CD8-positive, alpha-beta memory T cell (primary cell): ENCODE measurements at regions of chr14 and their contacts with region 1.

Region 1: GRCh38 chr14:24114536-24115450 is at the starts of genes DCAF11 and NRL:
- DNase-seq: peak; percentile 97 to 100 (median 99)
- H3K4me3 ChIP-seq: peak within 1 kb of the TSS; percentile 99
- H3K4me3 Mint-ChIP-seq: peak within 1 kb of the TSS; percentile 96 to 100 (median 98)
- H3K27ac ChIP-seq: peak within 1 kb of the TSS; percentile 98
- H3K27ac Mint-ChIP-seq: peak within 1 kb of the TSS; percentile 98 to 100 (median 99)
- H3K4me1 ChIP-seq: peaks cover 28% of the 10 kb centered on the region
- H3K4me1 Mint-ChIP-seq: peaks cover 30 to 37% (median 36%) of the 10 kb centered on the region in 3 donors
- H3K27me3 ChIP-seq: no peaks in the 10 kb centered on the region
- H3K27me3 Mint-ChIP-seq: peaks cover 0 to 5% of the 10 kb centered on the region in 2 donors
- total RNA-seq, gene DCAF11: 69.0 to 72.4 TPM
- total RNA-seq, gene NRL: 1.5 to 1.6 TPM

Region 2: GRCh38 chr14:24080888-24081738 is 33.7 kb before region 1 on chr14:
- CTCF ChIA-PET with region 1: interaction called, 36 read pairs
- POLR2A ChIA-PET with region 1: interaction called, 28 read pairs
- DNase-seq: peak; percentile 36 to 80 (median 64)
- H3K4me3 ChIP-seq: peak overlapping the region; percentile 62
- H3K4me3 Mint-ChIP-seq: peak overlapping the region; percentile 85 to 93 (median 88)
- H3K27ac ChIP-seq: peak overlapping the region; percentile 61
- H3K27ac Mint-ChIP-seq: peak overlapping the region; percentile 53 to 92 (median 82)
- H3K4me1 ChIP-seq: peaks cover 9% of the 10 kb centered on the region
- H3K4me1 Mint-ChIP-seq: peaks cover 15 to 18% (median 16%) of the 10 kb centered on the region in 3 donors
- H3K27me3 ChIP-seq: no peaks in the 10 kb centered on the region
- H3K27me3 Mint-ChIP-seq: peaks cover 0 to 2% of the 10 kb centered on the region in 2 donors

Region 3: DNA sequence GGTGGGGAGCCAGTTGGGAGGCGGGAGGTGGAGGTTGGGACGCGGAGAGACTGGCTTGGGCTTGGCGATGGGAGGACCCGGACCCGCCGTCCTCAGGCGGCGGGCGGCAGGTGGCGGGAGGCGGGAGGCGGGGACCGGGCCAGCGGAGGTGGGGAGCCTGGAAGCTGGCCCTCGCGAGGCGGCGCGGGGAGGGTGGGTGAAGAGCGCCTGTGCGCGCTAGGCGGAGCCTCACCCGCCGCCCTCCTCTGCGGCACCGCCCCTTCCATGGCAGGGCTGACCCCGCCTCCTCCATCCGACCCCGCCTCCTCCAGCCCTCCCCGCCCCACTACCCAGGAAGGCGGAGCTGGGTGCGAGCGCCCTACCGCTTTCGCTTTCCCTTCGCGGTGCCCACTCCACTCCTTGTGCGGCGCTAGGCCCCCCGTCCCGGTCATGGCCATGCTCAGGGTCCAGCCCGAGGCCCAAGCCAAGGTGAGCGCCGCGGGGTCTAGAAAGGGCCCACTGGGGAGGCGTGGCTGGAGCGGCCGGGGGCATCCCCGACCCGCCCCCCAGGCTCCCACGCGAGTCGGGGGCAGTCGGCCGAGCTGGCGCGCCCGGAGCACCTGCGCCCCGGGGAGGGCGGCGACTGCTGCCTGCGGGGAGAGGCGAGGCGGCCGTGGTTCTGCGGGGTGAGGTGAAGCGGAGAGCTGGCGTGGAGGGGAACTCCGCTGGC is 21.2 kb after region 1 on chr14 and contains the start of gene PSME1:
- CTCF ChIA-PET with region 1: interaction called, 28 read pairs
- POLR2A ChIA-PET with region 1: interaction called, 58 read pairs
- DNase-seq: peak; percentile 91 to 95 (median 93)
- H3K4me3 ChIP-seq: peak within 1 kb of the TSS; percentile 73
- H3K4me3 Mint-ChIP-seq: peak within 1 kb of the TSS; percentile 89 to 96 (median 92)
- H3K27ac ChIP-seq: peak within 1 kb of the TSS; percentile 72
- H3K27ac Mint-ChIP-seq: peak within 1 kb of the TSS; percentile 87 to 97 (median 95)
- H3K4me1 ChIP-seq: peaks cover 47% of the 10 kb centered on the region
- H3K4me1 Mint-ChIP-seq: peaks cover 56 to 67% (median 60%) of the 10 kb centered on the region in 3 donors
- H3K27me3 ChIP-seq: no peaks in the 10 kb centered on the region
- H3K27me3 Mint-ChIP-seq: no peaks in the 10 kb centered on the region
- total RNA-seq, gene PSME1: 343 to 347 TPM

Region 4: DNA sequence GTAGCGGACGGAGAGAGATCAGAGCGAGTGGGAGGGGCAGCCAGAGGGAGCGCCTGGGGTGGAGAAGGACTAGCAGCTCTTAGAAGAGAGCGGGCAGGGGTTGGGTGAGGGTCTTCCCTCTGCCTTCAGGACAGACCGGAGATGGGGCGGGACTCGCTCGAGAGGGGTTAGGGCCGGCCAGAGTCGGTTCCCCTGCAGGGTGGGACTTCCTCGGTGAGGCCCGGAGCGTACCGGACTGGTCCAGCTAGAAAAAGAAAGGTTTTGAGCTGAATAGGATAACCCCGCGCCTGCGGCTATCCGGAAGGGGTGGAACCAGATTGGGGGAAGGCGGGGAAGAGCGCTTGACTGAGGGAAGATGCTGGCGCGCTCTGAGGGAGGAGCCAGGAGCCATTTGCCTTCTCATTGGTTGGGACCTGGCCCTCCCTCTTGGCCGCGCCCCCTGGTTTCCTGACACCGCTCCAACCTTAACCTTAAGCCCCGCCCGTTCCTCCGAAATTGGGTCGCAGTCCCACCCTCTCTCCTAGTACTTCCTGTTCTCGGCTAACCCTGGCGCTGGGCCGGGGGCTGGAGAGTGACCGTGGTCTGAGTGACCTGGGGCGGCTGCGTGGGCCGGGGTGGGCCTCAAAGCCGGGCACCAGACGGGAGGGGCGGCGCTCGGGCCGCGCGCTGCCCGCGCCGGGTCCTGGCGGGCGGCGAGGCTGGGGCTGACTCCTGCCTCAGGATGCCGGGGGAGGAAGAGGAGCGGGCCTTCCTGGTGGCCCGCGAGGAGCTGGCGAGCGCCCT is 32.4 kb after region 1 on chr14 and contains the start of gene RNF31:
- CTCF ChIA-PET with region 1: interaction called, 9 read pairs
- POLR2A ChIA-PET with region 1: interaction called, 22 read pairs
- DNase-seq: peak; percentile 96 to 98 (median 97)
- H3K4me3 ChIP-seq: peak within 1 kb of the TSS; percentile 99
- H3K4me3 Mint-ChIP-seq: peak within 1 kb of the TSS; percentile 86 to 100 (median 98)
- H3K27ac ChIP-seq: peak within 1 kb of the TSS; percentile 78
- H3K27ac Mint-ChIP-seq: peak within 1 kb of the TSS; percentile 76 to 99 (median 96)
- H3K4me1 ChIP-seq: peaks cover 53% of the 10 kb centered on the region
- H3K4me1 Mint-ChIP-seq: peaks cover 45 to 70% (median 68%) of the 10 kb centered on the region in 3 donors
- H3K27me3 ChIP-seq: no peaks in the 10 kb centered on the region
- H3K27me3 Mint-ChIP-seq: no peaks in the 10 kb centered on the region
- total RNA-seq, gene RNF31: 85.9 TPM

Region 5: DNA sequence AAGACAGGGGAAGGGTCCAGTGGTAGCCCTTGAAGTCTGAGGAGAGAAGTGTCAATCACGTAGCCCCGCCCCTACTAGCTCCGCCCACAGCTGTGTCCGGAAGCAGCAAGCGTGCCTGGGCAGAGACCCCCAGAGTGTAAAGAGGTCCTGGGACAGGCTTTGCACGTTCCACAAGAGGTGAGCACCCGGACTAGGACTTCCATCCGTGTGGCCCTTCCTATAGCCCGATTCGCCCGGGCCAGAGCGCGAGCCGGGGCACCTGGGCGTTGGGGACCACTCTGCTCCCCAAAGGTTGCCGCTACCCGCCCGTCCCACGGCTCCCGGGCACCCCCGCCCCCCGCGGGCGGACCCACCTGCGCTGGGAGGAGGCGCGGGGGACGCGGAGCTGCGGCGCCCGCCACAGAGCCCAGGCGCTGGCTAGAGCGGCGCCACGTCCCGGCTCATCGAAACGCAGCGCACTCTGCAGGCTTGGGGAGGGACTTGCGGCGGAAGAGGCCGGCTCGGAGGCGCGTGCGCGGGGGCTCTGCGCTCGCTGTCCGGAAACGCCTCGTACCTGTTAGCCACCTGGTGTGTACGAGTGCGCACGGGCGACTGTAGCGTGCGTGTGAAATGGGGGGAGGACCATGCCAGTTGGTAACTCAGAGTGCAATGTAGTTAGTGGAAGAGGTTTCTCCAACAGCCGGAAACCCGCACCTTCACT is 156.5 kb after region 1 on chr14 and contains the start of gene RABGGTA:
- CTCF ChIA-PET with region 1: no interaction called
- POLR2A ChIA-PET with region 1: interaction called, 11 read pairs
- DNase-seq: peak; percentile 87 to 98 (median 96)
- H3K4me3 ChIP-seq: peak within 1 kb of the TSS; percentile 63
- H3K4me3 Mint-ChIP-seq: peak within 1 kb of the TSS; percentile 88 to 93 (median 92)
- H3K27ac ChIP-seq: peak within 1 kb of the TSS; percentile 86
- H3K27ac Mint-ChIP-seq: peak within 1 kb of the TSS; percentile 96 to 99 (median 98)
- H3K4me1 ChIP-seq: peaks cover 30% of the 10 kb centered on the region
- H3K4me1 Mint-ChIP-seq: peaks cover 37 to 44% (median 41%) of the 10 kb centered on the region in 3 donors
- H3K27me3 ChIP-seq: no peaks in the 10 kb centered on the region
- H3K27me3 Mint-ChIP-seq: peaks cover 0 to 5% of the 10 kb centered on the region in 2 donors
- total RNA-seq, gene RABGGTA: 41.0 to 41.8 TPM

Region 6: GRCh38 chr14:24431569-24432258 is 316.9 kb after region 1 on chr14:
- CTCF ChIA-PET with region 1: no interaction called
- POLR2A ChIA-PET with region 1: interaction called, 10 read pairs
- DNase-seq: peak; percentile 81 to 91 (median 83)
- H3K4me3 ChIP-seq: peak overlapping the region; percentile 82
- H3K4me3 Mint-ChIP-seq: peak overlapping the region; percentile 89 to 95 (median 91)
- H3K27ac ChIP-seq: no peak overlapping the region
- H3K27ac Mint-ChIP-seq: peak overlapping the region; percentile 77 to 97 (median 94)
- H3K4me1 ChIP-seq: peaks cover 48% of the 10 kb centered on the region
- H3K4me1 Mint-ChIP-seq: peaks cover 29 to 55% (median 39%) of the 10 kb centered on the region in 3 donors
- H3K27me3 ChIP-seq: no peaks in the 10 kb centered on the region
- H3K27me3 Mint-ChIP-seq: no peaks in the 10 kb centered on the region